AG04450 (cell line): ENCODE measurements at regions of chr1 and their contacts with region 1.

Region 1: GRCh38 chr1:181088079-181089016 is at the start of gene IER5:
- DNase-seq: peak; percentile 85
- H3K4me3 ChIP-seq: peak within 1 kb of the TSS; percentile 94
- H3K27ac ChIP-seq: peak within 1 kb of the TSS; percentile 71
- H3K27me3 ChIP-seq: no peaks in the 10 kb centered on the region
- CTCF ChIP-seq: no peak
- polyA plus RNA-seq, gene IER5: 20.4 and 20.7 TPM in 2 replicates

Region 2: GRCh38 chr1:180241716-180242526 is 846.4 kb before region 1 on chr1:
- CTCF ChIA-PET with region 1: no interaction called
- POLR2A ChIA-PET with region 1: interaction called, 11 read pairs
- DNase-seq: no peak
- H3K4me3 ChIP-seq: no peak overlapping the region
- H3K27ac ChIP-seq: no peak overlapping the region
- H3K27me3 ChIP-seq: peaks cover 66% of the 10 kb centered on the region
- CTCF ChIP-seq: no peak

Region 3: GRCh38 chr1:181021811-181022434 is 66.4 kb before region 1 on chr1:
- CTCF ChIA-PET with region 1: no interaction called
- POLR2A ChIA-PET with region 1: interaction called, 13 read pairs
- DNase-seq: peak; percentile 24
- H3K4me3 ChIP-seq: peak overlapping the region; percentile 96
- H3K27ac ChIP-seq: peak overlapping the region; percentile 70
- H3K27me3 ChIP-seq: no peaks in the 10 kb centered on the region
- CTCF ChIP-seq: no peak

Region 4: GRCh38 chr1:181105134-181106021 is 17.0 kb after region 1 on chr1:
- CTCF ChIA-PET with region 1: interaction called, 4 read pairs
- POLR2A ChIA-PET with region 1: interaction called, 80 read pairs
- DNase-seq: peak; percentile 61
- H3K4me3 ChIP-seq: peak overlapping the region; percentile 70
- H3K27ac ChIP-seq: peak overlapping the region; percentile 68
- H3K27me3 ChIP-seq: no peaks in the 10 kb centered on the region
- CTCF ChIP-seq: no peak

Region 5: GRCh38 chr1:181134543-181135362 is 46.4 kb after region 1 on chr1:
- CTCF ChIA-PET with region 1: interaction called, 54 read pairs
- POLR2A ChIA-PET with region 1: interaction called, 82 read pairs
- DNase-seq: peak; percentile 38
- H3K4me3 ChIP-seq: no peak overlapping the region
- H3K27ac ChIP-seq: peak overlapping the region; percentile 99
- H3K27me3 ChIP-seq: no peaks in the 10 kb centered on the region
- CTCF ChIP-seq: no peak